AG04449 (cell line): ENCODE measurements at regions of chrX and their contacts with region 1.

Region 1: GRCh38 chrX:68822641-68823410 is 6.0 kb upstream of the EFNB1 start:
- DNase-seq: no peak
- H3K4me3 ChIP-seq: no peak overlapping the region
- CTCF ChIP-seq: peak; percentile 56

Region 2: DNA sequence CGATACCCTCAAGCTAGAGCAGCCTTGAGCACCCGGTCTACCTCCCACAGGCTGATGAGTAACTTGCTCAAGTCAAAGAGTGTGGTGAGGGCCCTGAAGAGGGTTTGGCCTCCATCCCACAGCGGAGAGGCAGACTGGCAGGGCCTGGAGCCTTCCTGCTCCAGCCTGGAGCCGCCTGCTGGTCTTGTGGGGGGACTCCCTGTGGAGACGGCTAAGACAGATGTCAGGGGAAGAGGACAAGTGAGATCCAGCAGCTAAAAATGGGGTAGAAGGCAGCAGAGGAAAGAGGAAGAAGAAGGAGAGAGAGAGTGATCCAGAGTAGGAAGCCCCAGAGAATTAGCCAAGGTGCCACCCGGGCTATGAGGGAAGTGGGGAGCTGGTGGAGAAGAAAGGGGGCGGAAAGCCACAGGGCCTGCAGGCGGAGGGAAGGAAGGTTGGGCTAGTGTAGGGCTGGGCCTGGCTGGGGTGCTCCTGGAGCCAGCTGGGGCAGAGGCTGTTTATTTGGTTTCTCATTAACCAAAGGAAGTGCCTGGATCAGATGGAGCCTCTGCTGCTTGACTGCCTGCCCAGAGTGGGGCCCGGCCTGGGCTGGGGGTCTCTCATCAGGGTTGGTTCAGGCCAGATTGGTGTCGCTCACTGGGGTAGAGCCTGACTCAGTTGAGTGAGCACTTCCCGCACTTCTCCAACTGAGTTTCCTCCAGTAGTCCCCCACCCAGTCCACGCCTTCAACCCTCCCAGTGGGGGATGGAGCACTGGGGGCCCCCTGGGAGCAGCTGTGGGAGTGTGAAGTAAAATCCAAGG is 20.2 kb after region 1 on chrX:
- CTCF ChIA-PET with region 1: no interaction called
- POLR2A ChIA-PET with region 1: no interaction called
- DNase-seq: no peak
- H3K4me3 ChIP-seq: no peak overlapping the region
- CTCF ChIP-seq: no peak

Region 3: GRCh38 chrX:69285881-69286564 is 463.2 kb after region 1 on chrX:
- CTCF ChIA-PET with region 1: interaction called, 33 read pairs
- POLR2A ChIA-PET with region 1: interaction called, 12 read pairs
- DNase-seq: no peak
- H3K4me3 ChIP-seq: peak overlapping the region; percentile 52
- CTCF ChIP-seq: peak; percentile 87

Region 4: DNA sequence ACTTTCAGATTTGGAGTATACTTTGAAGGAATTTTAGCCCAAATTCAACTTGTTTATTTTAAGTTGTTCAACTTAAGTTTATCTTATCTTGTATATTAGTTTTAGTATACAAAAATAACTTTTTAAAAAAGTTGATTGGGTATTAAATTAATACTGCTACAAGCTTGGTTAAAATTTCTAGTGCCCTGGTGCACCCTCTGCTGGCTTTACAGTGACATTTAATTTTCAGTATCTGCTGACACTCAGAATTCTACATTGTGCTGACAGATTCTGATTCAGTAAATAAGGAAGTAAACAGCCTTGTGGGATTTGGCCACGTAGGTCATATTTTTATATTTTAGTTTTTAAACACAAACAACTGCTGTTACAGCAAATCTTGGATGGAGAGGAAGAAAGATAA is 796.0 kb after region 1 on chrX:
- CTCF ChIA-PET with region 1: interaction called, 12 read pairs
- POLR2A ChIA-PET with region 1: no interaction called
- DNase-seq: no peak
- H3K4me3 ChIP-seq: no peak overlapping the region
- CTCF ChIP-seq: no peak

Region 5: GRCh38 chrX:70030301-70030767 is 1207.5 kb after region 1 on chrX:
- CTCF ChIA-PET with region 1: interaction called, 13 read pairs
- POLR2A ChIA-PET with region 1: no interaction called
- DNase-seq: no peak
- H3K4me3 ChIP-seq: no peak overlapping the region
- CTCF ChIP-seq: peak; percentile 70